Keratinocyte (primary cell): ENCODE measurements at regions of chr1 and their contacts with region 1.

Region 1: GRCh38 chr1:23184212-23184934 is 15.7 kb upstream of the LUZP1 start:
- DNase-seq: no peak
- H3K4me3 ChIP-seq: no peak overlapping the region
- H3K27ac ChIP-seq: no peak overlapping the region
- H3K4me1 ChIP-seq: peaks cover 14% of the 10 kb centered on the region
- H3K27me3 ChIP-seq: no peaks in the 10 kb centered on the region
- CTCF ChIP-seq: peak; percentile 60 to 68 (median 61)

Region 2: DNA sequence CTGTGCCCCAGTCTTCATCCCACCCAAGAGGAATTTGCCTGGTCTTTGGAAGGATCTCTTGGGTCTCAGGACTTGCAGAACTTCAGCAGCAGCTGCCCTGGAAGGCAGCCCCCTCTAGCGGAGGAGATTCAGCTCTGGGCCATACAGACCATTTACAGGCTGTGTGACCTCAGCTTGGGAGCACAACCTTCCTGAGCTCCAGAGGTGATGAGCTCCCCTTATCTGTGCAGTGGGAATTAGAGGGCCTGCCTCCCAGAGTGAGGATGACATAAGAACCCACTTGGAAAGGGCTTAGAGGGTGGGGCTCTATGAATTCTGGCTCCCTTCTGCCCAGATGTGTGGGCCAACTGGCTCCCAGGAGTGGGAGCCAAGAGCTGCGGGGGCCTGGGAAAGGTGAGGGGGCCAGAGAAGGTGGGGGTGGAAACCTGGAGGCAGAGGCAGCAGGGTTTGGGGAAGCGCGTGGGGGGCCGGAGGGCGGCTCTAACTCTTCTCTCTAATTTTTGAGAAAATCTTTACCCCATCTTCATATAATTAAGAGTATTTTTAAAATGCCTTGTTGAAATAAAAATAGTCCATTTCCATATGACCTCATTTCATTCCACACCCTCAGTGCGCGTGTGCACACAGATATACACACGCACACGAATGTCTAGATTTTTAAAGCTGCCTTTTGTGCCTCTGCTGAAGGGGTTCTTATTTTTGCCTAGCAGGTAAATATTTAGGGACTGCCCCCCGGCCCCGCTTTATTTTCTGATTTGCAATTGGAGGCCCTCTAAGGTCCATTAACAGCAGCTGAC is 452.3 kb before region 1 on chr1:
- dilution Hi-C with region 1: no loop called
- DNase-seq: no peak
- H3K4me3 ChIP-seq: no peak overlapping the region
- H3K27ac ChIP-seq: no peak overlapping the region
- H3K4me1 ChIP-seq: no peaks in the 10 kb centered on the region
- H3K27me3 ChIP-seq: no peaks in the 10 kb centered on the region
- CTCF ChIP-seq: peak; percentile 11 to 34 (median 19)

Region 3: DNA sequence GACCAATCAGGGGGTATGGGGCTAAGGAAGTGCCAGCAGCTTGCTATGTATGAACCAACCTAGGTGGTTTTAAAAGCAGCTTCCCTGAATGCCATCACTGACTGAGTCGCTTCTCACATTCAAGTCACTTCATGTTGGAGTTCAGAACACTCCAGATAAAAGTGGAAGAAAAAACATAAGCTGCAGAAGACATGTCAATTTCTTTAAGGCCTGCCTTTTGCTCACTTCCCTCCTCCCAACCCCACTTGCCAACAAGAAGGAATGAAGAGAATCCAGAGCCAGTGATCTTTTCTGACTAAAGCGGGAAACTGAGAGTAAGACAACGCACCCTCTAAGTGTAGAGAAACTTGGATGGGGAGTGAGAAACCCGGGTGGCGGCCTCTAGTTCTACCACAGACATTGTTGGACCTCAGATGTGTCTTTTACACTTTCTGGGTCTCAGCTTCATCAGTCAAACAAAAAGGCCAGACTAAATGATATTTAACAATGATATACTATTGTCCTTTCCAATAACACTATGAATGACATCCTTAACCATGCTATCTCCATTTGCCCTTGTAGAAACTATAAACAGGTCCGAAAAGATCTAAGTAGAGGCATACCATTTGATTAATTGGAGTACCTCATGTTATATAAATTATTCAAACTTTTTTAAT is 69.8 kb before region 1 on chr1:
- dilution Hi-C with region 1: loop called (anchors 5 kb)
- DNase-seq: no peak
- H3K4me3 ChIP-seq: peak overlapping the region in 2 of 3 experiments; percentile 2 to 37
- H3K27ac ChIP-seq: peak overlapping the region; percentile 13
- H3K4me1 ChIP-seq: peaks cover 55% of the 10 kb centered on the region
- H3K27me3 ChIP-seq: no peaks in the 10 kb centered on the region
- CTCF ChIP-seq: no peak